MCF 10A (cell line): ENCODE measurements at regions of chr11 and their contacts with region 1.

Region 1: GRCh38 chr11:66429983-66430602 is 8.6 kb downstream of the MRPL11 start:
- DNase-seq: peak; percentile 73
- H3K4me3 Mint-ChIP-seq: no peak overlapping the region
- H3K27ac Mint-ChIP-seq: no peak overlapping the region
- H3K4me1 Mint-ChIP-seq: no peaks in the 10 kb centered on the region
- H3K27me3 Mint-ChIP-seq: peaks cover 6% of the 10 kb centered on the region
- CTCF ChIP-seq: peak; percentile 90

Region 2: DNA sequence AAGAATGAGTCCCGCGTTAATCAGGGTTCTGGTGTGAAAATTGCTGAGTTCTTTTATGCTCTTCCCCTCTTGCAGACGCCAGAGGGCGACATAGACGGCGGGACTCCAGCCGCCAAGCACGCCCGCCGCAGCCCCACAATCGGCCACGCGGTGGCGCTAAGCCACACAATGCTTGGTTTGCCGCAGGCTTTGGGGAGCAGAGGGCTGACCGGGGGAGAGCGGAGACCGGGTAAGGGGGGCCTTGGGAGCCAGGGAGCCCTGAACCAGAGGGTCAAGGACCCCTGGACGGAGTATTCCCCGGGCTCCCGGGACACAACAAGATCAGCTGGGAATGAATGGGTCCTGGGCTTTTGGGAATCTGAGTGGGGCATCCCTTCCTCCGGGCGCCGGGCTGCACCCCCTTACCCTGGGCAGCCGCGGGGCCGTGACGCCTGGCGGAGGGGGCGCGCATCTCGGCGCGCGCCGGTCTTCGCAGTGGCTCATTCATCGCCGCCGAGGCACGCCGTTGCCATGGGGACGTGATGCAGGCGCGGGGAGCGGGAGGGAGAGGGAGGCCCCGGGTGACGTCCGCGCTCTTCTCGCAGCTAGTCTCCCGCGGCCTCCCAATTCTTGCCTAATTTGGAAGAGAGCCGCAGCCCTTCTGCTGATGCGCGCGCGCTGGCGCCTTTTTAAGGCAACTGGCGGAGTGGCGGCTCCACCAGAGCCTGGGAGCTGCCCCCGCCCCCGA is 21.4 kb before region 1 on chr11:
- CTCF ChIA-PET with region 1: interaction called, 17 read pairs
- POLR2A ChIA-PET with region 1: no interaction called
- intact Hi-C with region 1: loop called (anchors 1 kb)
- DNase-seq: peak; percentile 83
- H3K4me3 Mint-ChIP-seq: peak overlapping the region; percentile 56
- H3K27ac Mint-ChIP-seq: no peak overlapping the region
- H3K4me1 Mint-ChIP-seq: no peaks in the 10 kb centered on the region
- H3K27me3 Mint-ChIP-seq: peaks cover 64% of the 10 kb centered on the region
- CTCF ChIP-seq: peak; percentile 100